Dendritic cell treated with granulocyte-macrophage colony-stimulating factor and Interleukin-4, amounts not matched to agents 40 ng/mL and 50 ng/mL, for 4 days (primary cell): ENCODE measurements at regions of chr17 and their contacts with region 1.

Region 1: GRCh38 chr17:48131216-48131824 is 23.8 kb downstream of the SNX11 start:
- H3K4me3 Mint-ChIP-seq: no peak overlapping the region
- H3K27ac Mint-ChIP-seq: peak overlapping the region; percentile 72
- H3K4me1 Mint-ChIP-seq: peaks cover 13% of the 10 kb centered on the region
- H3K27me3 Mint-ChIP-seq: no peaks in the 10 kb centered on the region

Region 2: GRCh38 chr17:48081858-48082257 is 49.5 kb before region 1 on chr17:
- intact Hi-C with region 1: loop called (anchors 2 kb)
- H3K4me3 Mint-ChIP-seq: no peak overlapping the region
- H3K27ac Mint-ChIP-seq: no peak overlapping the region
- H3K4me1 Mint-ChIP-seq: no peaks in the 10 kb centered on the region
- H3K27me3 Mint-ChIP-seq: no peaks in the 10 kb centered on the region

Region 3: DNA sequence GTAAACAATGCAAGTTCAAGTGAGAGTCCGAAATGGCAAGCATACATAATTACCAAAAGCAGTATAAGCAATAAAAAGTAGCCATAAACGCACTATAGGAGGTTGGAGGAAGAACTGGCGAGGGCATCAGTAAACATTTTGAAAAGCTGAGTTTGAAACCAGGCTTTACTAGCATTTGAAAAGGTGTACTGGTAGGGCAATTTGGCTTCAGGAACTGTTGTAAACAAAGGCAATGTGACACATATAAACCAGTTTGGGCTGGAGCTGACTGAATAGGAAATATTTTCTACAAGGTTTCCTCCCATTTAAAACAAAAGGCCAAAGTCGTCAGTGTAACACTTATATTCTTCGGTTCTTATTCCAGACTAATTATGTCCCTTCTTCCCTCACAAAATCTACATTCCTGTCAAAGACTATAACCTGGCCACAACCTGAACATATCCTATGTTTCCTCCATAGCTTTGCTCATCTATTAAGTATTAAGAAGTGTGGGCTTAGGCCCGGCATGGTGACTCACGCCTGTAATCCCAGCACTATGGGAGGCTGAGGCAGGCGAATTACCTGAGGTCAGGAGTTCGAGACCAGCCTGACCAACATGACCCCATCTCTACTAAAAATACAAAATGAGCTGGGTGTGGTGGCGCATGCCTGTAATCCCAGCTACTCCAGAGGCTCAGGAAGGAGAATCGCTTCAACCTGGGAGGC is 37.8 kb before region 1 on chr17:
- intact Hi-C with region 1: loop called (anchors 5 kb)
- H3K4me3 Mint-ChIP-seq: no peak overlapping the region
- H3K27ac Mint-ChIP-seq: no peak overlapping the region
- H3K4me1 Mint-ChIP-seq: peaks cover 7% of the 10 kb centered on the region
- H3K27me3 Mint-ChIP-seq: no peaks in the 10 kb centered on the region